GM12878 (cell line): ENCODE measurements at regions of chr1 and their contacts with region 1.

Region 1: GRCh38 chr1:169049258-169049938 is 57.1 kb upstream of the ATP1B1 start:
- DNase-seq: no peak
- ATAC-seq: peak; percentile 9
- H3K4me3 ChIP-seq: no peak overlapping the region
- H3K27ac ChIP-seq: no peak overlapping the region
- H3K4me1 ChIP-seq: peaks cover 44% of the 10 kb centered on the region
- H3K27me3 ChIP-seq: no peaks in the 10 kb centered on the region
- CTCF ChIP-seq: no peak
- EP300 ChIP-seq: peak in 1 of 2 experiments; percentile 52; a peak in 2 of 4 replicates
- POLR2A ChIP-seq: no peak
- RAD21 ChIP-seq: no peak

Region 2: DNA sequence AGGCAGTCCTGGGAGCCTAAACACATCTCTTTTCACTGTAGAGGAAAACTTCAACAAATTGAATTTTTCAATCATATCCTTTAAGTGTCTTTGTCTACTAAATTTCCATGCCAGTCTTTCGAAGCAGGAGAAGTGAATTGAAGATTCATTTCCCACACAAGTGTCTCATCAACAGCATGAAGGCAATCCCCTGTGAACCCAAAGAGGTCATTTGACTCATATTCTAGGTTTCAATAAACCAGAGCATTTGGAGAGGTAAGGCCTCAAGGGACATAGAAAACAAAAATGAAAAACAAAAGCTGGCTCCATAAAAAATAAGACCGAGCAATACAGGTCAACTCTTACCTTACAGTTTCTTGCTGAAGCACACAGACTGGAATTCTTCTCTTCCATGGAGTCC is 37.0 kb before region 1 on chr1:
- CTCF ChIA-PET with region 1: interaction called, 4 read pairs
- POLR2A ChIA-PET with region 1: interaction called, 29 read pairs
- RAD21 ChIA-PET with region 1: interaction called, 21 read pairs
- SMC1A ChIA-PET with region 1: interaction called, 44 read pairs
- in situ Hi-C with region 1: no loop called
- intact Hi-C with region 1: loop called (anchors 2 kb)
- DNase-seq: peak; percentile 73
- ATAC-seq: peak; percentile 82
- H3K4me3 ChIP-seq: no peak overlapping the region
- H3K27ac ChIP-seq: peak overlapping the region; percentile 54
- H3K4me1 ChIP-seq: peaks cover 21% of the 10 kb centered on the region
- H3K27me3 ChIP-seq: no peaks in the 10 kb centered on the region
- CTCF ChIP-seq: no peak
- EP300 ChIP-seq: peak; percentile 43 to 86; a peak in 2 of 4 replicates
- POLR2A ChIP-seq: no peak
- RAD21 ChIP-seq: no peak